Activated naive CD4-positive, alpha-beta T cell treated with anti-CD3 and anti-CD28 coated beads, Interleukin-2, amount 10 ng/mL, durations not matched to agents 7 days and 5 days (primary cell): ENCODE measurements at regions of chr1 and their contacts with region 1.

Region 1: GRCh38 chr1:40425198-40425597 is 25.1 kb upstream of the ZFP69B start:
- DNase-seq: no peak
- H3K4me3 Mint-ChIP-seq: no peak overlapping the region
- H3K27ac Mint-ChIP-seq: no peak overlapping the region
- H3K4me1 Mint-ChIP-seq: peaks cover 2% of the 10 kb centered on the region
- H3K27me3 Mint-ChIP-seq: no peaks in the 10 kb centered on the region

Region 2: GRCh38 chr1:40352126-40352525 is 73.1 kb before region 1 on chr1:
- CTCF ChIA-PET with region 1: no interaction called
- DNase-seq: no peak
- H3K4me3 Mint-ChIP-seq: no peak overlapping the region
- H3K27ac Mint-ChIP-seq: no peak overlapping the region
- H3K4me1 Mint-ChIP-seq: no peaks in the 10 kb centered on the region
- H3K27me3 Mint-ChIP-seq: no peaks in the 10 kb centered on the region

Region 3: DNA sequence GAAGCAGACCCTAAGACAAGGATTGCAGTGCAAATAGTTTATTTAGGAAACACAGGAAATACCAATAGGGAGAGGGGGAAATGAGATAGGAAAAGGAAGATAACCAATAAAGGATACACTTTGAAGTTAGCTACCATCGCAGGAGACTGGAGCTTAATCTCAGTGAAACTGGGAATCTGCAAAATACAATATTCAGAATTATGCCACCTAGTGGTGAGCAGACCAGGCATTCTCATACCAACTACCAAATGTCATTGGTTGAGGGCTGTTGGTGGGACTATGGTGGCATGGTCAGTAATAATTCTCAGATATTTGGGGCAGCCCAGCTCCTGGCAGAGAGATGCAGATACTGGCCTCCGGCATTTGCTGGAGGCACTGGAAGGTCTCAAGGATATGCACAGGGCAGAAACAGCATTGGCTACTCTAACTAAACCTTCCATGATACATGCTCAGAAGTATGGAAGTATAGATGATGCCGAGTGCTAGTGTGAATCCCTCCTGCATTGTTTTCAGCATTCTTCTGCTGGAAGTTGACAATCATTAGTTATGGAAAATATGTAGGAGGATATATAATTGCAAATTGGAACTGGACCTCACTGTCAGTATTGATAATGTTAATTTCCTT is 13.3 kb after region 1 on chr1:
- CTCF ChIA-PET with region 1: interaction called, 15 read pairs
- DNase-seq: peak; percentile 32
- H3K4me3 Mint-ChIP-seq: no peak overlapping the region
- H3K27ac Mint-ChIP-seq: no peak overlapping the region
- H3K4me1 Mint-ChIP-seq: no peaks in the 10 kb centered on the region
- H3K27me3 Mint-ChIP-seq: no peaks in the 10 kb centered on the region